AG04449 (cell line): ENCODE measurements at regions of chr18 and their contacts with region 1.

Region 1: GRCh38 chr18:6219116-6219717 is 195.5 kb downstream of the L3MBTL4 start:
- DNase-seq: peak; percentile 5
- H3K4me3 ChIP-seq: no peak overlapping the region
- CTCF ChIP-seq: peak; percentile 92

Region 2: DNA sequence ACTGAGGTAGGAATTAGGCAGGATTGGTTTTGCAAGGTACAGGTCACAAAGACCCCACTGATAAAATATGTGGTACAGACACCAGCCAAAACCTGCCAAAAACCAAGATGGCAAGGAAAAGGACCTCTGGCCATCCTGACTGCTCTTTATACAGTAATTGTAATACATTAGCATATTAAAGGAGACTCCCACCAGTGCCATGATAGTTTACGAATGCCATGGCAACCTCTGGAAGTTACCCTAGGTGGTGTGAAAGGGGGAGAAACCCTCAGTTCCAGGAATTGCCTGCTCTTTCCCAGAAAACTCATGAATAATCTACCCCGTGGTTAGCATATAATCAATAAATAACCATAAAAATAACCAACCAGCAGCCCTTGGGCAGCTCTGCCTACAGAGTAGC is 545.6 kb before region 1 on chr18:
- CTCF ChIA-PET with region 1: no interaction called
- POLR2A ChIA-PET with region 1: no interaction called
- DNase-seq: no peak
- H3K4me3 ChIP-seq: no peak overlapping the region
- CTCF ChIP-seq: no peak

Region 3: GRCh38 chr18:5868218-5869115 is 350.8 kb before region 1 on chr18:
- CTCF ChIA-PET with region 1: interaction called, 17 read pairs
- POLR2A ChIA-PET with region 1: no interaction called
- DNase-seq: peak; percentile 38
- H3K4me3 ChIP-seq: no peak overlapping the region
- CTCF ChIP-seq: peak; percentile 67

Region 4: GRCh38 chr18:5890331-5891183 is 328.7 kb before region 1 on chr18:
- CTCF ChIA-PET with region 1: interaction called, 13 read pairs
- POLR2A ChIA-PET with region 1: no interaction called
- DNase-seq: no peak
- H3K4me3 ChIP-seq: peak overlapping the region; percentile 25; the same call in 1 of the 2 replicates
- CTCF ChIP-seq: peak; percentile 18

Region 5: DNA sequence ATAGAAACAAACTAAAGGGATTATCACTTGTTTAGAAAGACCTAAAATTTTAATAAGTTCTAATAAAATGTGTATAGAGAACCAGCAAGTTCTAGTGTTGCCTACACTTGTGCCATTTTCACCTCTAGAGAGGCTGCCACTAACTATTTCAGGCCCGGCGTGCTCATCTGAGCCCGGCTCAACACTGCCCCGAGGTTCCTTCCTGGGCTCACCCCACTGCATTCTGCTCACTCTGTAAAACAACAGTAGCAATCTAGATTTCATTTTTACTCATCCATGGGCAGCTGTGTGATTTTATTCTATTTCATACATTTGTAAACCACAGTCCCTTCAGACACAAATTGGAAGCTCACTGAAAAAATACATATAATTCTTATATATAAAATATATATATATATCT is 57.7 kb before region 1 on chr18:
- CTCF ChIA-PET with region 1: no interaction called
- POLR2A ChIA-PET with region 1: no interaction called
- DNase-seq: no peak
- H3K4me3 ChIP-seq: no peak overlapping the region
- CTCF ChIP-seq: no peak

Region 6: DNA sequence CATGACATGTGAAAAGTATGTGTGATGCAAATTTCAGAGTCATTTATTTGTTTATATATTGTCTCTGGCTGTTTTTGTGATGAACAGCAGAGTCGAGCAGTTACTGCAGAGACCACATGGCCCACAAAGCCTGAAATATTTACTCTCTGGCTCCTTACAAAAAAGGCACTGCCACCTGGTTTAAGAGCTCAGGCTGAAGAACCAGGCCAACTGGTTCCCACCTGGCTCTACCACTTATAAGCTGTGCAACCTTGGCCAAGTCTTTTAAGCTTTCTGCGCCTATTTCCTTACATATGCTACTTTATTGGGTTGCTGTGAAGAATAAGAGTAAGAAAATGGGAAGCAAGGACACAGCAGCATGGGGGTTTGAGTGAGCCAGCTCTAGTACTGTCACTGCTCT is 12.1 kb before region 1 on chr18:
- CTCF ChIA-PET with region 1: interaction called, 32 read pairs
- POLR2A ChIA-PET with region 1: no interaction called
- DNase-seq: no peak
- H3K4me3 ChIP-seq: no peak overlapping the region
- CTCF ChIP-seq: no peak

Region 7: DNA sequence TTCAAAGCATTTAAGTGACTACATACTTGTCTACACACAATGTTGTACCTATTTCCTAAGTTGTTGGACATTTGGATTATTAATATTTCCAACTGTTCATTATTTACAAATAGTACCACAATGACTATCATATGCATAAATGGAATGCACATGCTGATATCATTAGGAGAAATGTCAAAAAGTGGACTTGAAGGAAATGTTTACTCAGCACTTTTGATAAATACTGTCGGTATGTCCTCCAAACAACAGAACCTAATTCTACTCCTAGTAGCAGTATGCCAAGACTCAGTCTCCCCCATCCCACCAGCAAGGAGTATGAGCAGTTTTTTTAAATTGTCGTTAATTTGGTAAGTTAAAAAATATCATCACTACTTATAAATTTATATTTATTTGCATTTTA is 78.7 kb after region 1 on chr18:
- CTCF ChIA-PET with region 1: no interaction called
- POLR2A ChIA-PET with region 1: no interaction called
- DNase-seq: no peak
- H3K4me3 ChIP-seq: no peak overlapping the region
- CTCF ChIP-seq: no peak

Region 8: GRCh38 chr18:6401687-6402086 is 182.5 kb after region 1 on chr18:
- CTCF ChIA-PET with region 1: no interaction called
- POLR2A ChIA-PET with region 1: no interaction called
- DNase-seq: no peak
- H3K4me3 ChIP-seq: no peak overlapping the region
- CTCF ChIP-seq: no peak